HEK293 (cell line): ENCODE measurements at regions of chr9 and their contacts with region 1.

Region 1: GRCh38 chr9:124852829-124853531 is at the start of gene WDR38:
- H3K4me3 ChIP-seq: peak within 1 kb of the TSS; percentile 47
- H3K27ac ChIP-seq: no peak within 1 kb of the TSS
- H3K4me1 ChIP-seq: no peaks in the 10 kb centered on the region
- CTCF ChIP-seq: peak; percentile 98

Region 2: GRCh38 chr9:124708633-124709291 is 144.2 kb before region 1 on chr9:
- CTCF ChIA-PET with region 1: interaction called, 34 read pairs
- POLR2A ChIA-PET with region 1: no interaction called
- H3K4me3 ChIP-seq: no peak overlapping the region
- H3K27ac ChIP-seq: no peak overlapping the region
- H3K4me1 ChIP-seq: no peaks in the 10 kb centered on the region
- CTCF ChIP-seq: no peak

Region 3: GRCh38 chr9:124786881-124787573 is 66.0 kb before region 1 on chr9:
- CTCF ChIA-PET with region 1: interaction called, 1,257 read pairs
- POLR2A ChIA-PET with region 1: no interaction called
- H3K4me3 ChIP-seq: no peak overlapping the region
- H3K27ac ChIP-seq: no peak overlapping the region
- H3K4me1 ChIP-seq: no peaks in the 10 kb centered on the region
- CTCF ChIP-seq: no peak

Region 4: GRCh38 chr9:124812401-124813016 is 40.5 kb before region 1 on chr9:
- CTCF ChIA-PET with region 1: interaction called, 75 read pairs
- POLR2A ChIA-PET with region 1: interaction called, 8 read pairs
- H3K4me3 ChIP-seq: no peak overlapping the region
- H3K27ac ChIP-seq: no peak overlapping the region; the same call in none of the 2 replicates
- H3K4me1 ChIP-seq: 0 out of 2 replicates have a peak, but pooled peaks cover 3% of the 10 kb centered on the region
- CTCF ChIP-seq: no peak

Region 5: GRCh38 chr9:124839612-124840299 is 13.2 kb before region 1 on chr9:
- CTCF ChIA-PET with region 1: interaction called, 154 read pairs
- POLR2A ChIA-PET with region 1: interaction called, 6 read pairs
- H3K4me3 ChIP-seq: no peak overlapping the region
- H3K27ac ChIP-seq: no peak overlapping the region
- H3K4me1 ChIP-seq: peaks cover 3% of the 10 kb centered on the region; the same call in 1 of the 2 replicates
- CTCF ChIP-seq: no peak

Region 6: GRCh38 chr9:125241000-125241862 is 388.3 kb after region 1 on chr9 and contains the start of gene HSPA5:
- CTCF ChIA-PET with region 1: interaction called, 3 read pairs
- POLR2A ChIA-PET with region 1: interaction called, 12 read pairs
- H3K4me3 ChIP-seq: peak within 1 kb of the TSS; percentile 66
- H3K27ac ChIP-seq: peak within 1 kb of the TSS; percentile 81
- H3K4me1 ChIP-seq: no peaks in the 10 kb centered on the region
- CTCF ChIP-seq: peak; percentile 74; the same call in 1 of the 2 replicates